IMR-90 (cell line): ENCODE measurements at regions of chrX and their contacts with region 1.

Region 1: GRCh38 chrX:136694431-136695087 is 46.6 kb downstream of the CD40LG start:
- DNase-seq: peak; percentile 58
- ATAC-seq: peak; percentile 82
- H3K4me3 ChIP-seq: no peak overlapping the region
- H3K27ac ChIP-seq: no peak overlapping the region
- H3K4me1 ChIP-seq: no peaks in the 10 kb centered on the region
- H3K27me3 ChIP-seq: no peaks in the 10 kb centered on the region; the same call in 1 of the 2 replicates
- CTCF ChIP-seq: peak; percentile 67
- POLR2A ChIP-seq: no peak
- RAD21 ChIP-seq: peak; percentile 80

Region 2: DNA sequence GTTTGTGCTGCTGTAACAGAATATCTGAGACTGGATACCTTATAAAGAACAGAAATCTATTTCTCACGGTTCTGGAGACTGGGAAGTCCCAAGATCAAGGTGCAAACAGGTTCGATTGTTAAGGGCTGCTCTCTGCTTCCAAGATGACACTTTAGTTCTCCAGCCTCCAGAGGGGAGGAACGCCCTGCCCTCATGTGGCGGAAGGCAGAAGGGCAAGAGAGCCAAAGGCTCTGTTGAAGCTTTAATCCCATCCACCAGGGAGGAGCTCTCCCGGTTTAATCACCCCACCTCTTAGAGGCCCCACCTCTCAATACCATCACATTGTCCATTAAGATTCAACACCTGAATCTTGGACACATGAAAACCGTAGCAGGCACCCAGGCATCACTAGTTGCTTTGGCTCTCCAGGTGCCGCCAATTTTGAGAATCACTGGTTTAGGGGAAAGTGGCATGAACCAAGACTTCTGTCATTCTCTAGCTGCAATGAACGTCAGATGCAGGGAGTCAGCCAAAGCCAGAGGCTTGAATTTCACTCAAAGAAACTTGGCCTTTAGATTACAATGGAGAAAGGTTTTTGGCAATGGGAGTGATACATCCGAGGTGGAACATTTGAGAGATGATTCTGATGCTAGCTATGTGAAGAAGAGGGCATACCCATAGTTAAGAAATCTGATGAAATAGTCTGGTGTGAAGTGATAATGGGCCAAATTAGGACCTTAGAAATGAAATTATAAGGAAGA is 531.6 kb before region 1 on chrX:
- CTCF ChIA-PET with region 1: no interaction called
- POLR2A ChIA-PET with region 1: no interaction called
- dilution Hi-C with region 1: no loop called
- in situ Hi-C with region 1: no loop called
- intact Hi-C with region 1: loop called (anchors 10 kb)
- DNase-seq: peak; percentile 43
- ATAC-seq: peak; percentile 80
- H3K4me3 ChIP-seq: no peak overlapping the region
- H3K27ac ChIP-seq: no peak overlapping the region
- H3K4me1 ChIP-seq: peaks cover 13% of the 10 kb centered on the region; the same call in 1 of the 2 replicates
- H3K27me3 ChIP-seq: no peaks in the 10 kb centered on the region
- CTCF ChIP-seq: peak; percentile 72
- POLR2A ChIP-seq: no peak
- RAD21 ChIP-seq: peak; percentile 72

Region 3: GRCh38 chrX:136718091-136718490 is 23.5 kb after region 1 on chrX:
- CTCF ChIA-PET with region 1: no interaction called
- POLR2A ChIA-PET with region 1: no interaction called
- dilution Hi-C with region 1: no loop called
- in situ Hi-C with region 1: no loop called
- intact Hi-C with region 1: no loop called
- DNase-seq: no peak
- ATAC-seq: no peak
- H3K4me3 ChIP-seq: no peak overlapping the region
- H3K27ac ChIP-seq: no peak overlapping the region
- H3K4me1 ChIP-seq: no peaks in the 10 kb centered on the region
- H3K27me3 ChIP-seq: no peaks in the 10 kb centered on the region
- CTCF ChIP-seq: no peak
- POLR2A ChIP-seq: no peak
- RAD21 ChIP-seq: no peak